ENCODE measurements at regions of chr5 and their contacts with region 1.

Region 1: GRCh38 chr5:141968914-141969608 is at the start of gene RNF14:
- DNase-seq: peak; percentile 91 to 96 (median 94)
- ATAC-seq: peak; percentile 94 to 96
- H3K4me3 Mint-ChIP-seq: peak within 1 kb of the TSS; percentile 92 to 99 (median 96)
- H3K27ac Mint-ChIP-seq: peak within 1 kb of the TSS; percentile 92 to 99 (median 97)
- H3K4me1 Mint-ChIP-seq: peaks cover 7 to 39% (median 32%) of the 10 kb centered on the region in 4 donors
- H3K27me3 Mint-ChIP-seq: no peaks in the 10 kb centered on the region
- polyA plus RNA-seq, gene RNF14: 27.4 to 40.1 (median 30.1) TPM

Region 2: DNA sequence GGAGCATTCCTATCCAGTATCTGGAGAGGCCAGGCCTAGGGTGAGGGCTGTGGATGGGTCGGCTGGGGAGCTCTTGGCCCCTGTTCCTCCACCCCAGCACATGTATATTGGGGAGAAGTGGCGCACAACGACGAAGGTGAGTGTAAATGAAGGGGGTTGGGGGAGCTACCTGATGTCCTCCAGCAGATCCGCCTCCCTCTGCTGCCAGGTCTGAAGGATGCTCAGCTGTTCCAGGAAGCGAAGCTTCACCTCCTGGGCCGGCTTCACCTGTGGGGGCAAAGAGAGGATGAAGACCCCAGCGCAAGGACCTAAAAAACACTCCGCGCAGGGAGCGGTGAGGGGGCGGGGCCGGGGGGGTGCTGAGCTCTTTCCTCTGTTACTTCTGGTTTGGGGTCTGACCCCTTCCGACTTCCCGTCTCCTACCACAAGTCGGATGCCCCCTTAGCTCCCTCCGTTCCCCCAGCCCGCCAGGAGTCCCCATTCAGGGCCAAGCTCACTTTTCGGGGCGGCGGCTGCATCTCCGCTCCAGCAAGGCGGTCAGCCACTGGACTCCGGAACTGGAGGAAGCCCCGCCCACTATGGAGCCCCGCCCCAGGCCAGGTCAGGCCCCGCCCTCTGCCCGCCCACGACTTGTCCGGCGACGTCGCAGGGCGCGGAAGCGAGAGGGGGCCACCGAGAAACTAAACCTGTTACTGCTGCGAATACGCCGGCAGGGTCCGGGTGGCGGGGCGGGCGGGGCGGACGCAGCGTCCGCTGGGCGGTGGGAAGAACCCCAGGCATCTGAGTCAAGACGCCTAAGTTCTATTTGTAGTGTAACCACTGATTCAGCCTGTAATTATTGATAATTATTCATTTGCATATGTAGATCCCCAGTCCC is 318.0 kb before region 1 on chr5 and contains the start of gene FCHSD1:
- POLR2A ChIA-PET with region 1: interaction called, 16 read pairs
- DNase-seq: peak; percentile 57 to 89 (median 80)
- ATAC-seq: peak; percentile 87 to 95
- H3K4me3 Mint-ChIP-seq: peak within 1 kb of the TSS; percentile 67 to 97 (median 92)
- H3K27ac Mint-ChIP-seq: peak within 1 kb of the TSS; percentile 79 to 98 (median 94)
- H3K4me1 Mint-ChIP-seq: peaks cover 37 to 56% (median 44%) of the 10 kb centered on the region in 4 donors
- H3K27me3 Mint-ChIP-seq: peaks cover 0 to 5% (median 0%) of the 10 kb centered on the region in 5 donors
- polyA plus RNA-seq, gene FCHSD1: 8.8 to 9.4 (median 9.3) TPM

Region 3: GRCh38 chr5:141661894-141662435 is 307.1 kb before region 1 on chr5:
- POLR2A ChIA-PET with region 1: no interaction called
- DNase-seq: peak in 1 of 10 donors; percentile 19
- ATAC-seq: no peak
- H3K4me3 Mint-ChIP-seq: no peak overlapping the region
- H3K27ac Mint-ChIP-seq: no peak overlapping the region
- H3K4me1 Mint-ChIP-seq: peaks cover 2 to 6% (median 5%) of the 10 kb centered on the region in 4 donors
- H3K27me3 Mint-ChIP-seq: peaks cover 0 to 5% (median 0%) of the 10 kb centered on the region in 5 donors

Region 4: GRCh38 chr5:141681695-141682641 is 287.1 kb before region 1 on chr5 and contains the start of gene ARAP3:
- POLR2A ChIA-PET with region 1: interaction called, 15 read pairs
- DNase-seq: peak in 5 of 10 donors; percentile 22 to 48 (median 41)
- ATAC-seq: peak; percentile 56 to 79
- H3K4me3 Mint-ChIP-seq: peak within 1 kb of the TSS; percentile 32 to 89 (median 83)
- H3K27ac Mint-ChIP-seq: peak within 1 kb of the TSS; percentile 42 to 95 (median 87)
- H3K4me1 Mint-ChIP-seq: peaks cover 18 to 44% (median 29%) of the 10 kb centered on the region in 4 donors
- H3K27me3 Mint-ChIP-seq: no peaks in the 10 kb centered on the region
- polyA plus RNA-seq, gene ARAP3: not detected

Region 5: GRCh38 chr5:141849375-141850243 is 119.5 kb before region 1 on chr5:
- POLR2A ChIA-PET with region 1: interaction called, 12 read pairs
- DNase-seq: peak; percentile 39 to 77 (median 59)
- ATAC-seq: peak; percentile 72 to 78
- H3K4me3 Mint-ChIP-seq: peak overlapping the region; percentile 82 to 93 (median 87)
- H3K27ac Mint-ChIP-seq: peak overlapping the region in 9 of 10 donors; percentile 60 to 92 (median 87)
- H3K4me1 Mint-ChIP-seq: peaks cover 8 to 24% (median 13%) of the 10 kb centered on the region in 4 donors
- H3K27me3 Mint-ChIP-seq: peaks cover 0 to 5% (median 1%) of the 10 kb centered on the region in 5 donors

Region 6: DNA sequence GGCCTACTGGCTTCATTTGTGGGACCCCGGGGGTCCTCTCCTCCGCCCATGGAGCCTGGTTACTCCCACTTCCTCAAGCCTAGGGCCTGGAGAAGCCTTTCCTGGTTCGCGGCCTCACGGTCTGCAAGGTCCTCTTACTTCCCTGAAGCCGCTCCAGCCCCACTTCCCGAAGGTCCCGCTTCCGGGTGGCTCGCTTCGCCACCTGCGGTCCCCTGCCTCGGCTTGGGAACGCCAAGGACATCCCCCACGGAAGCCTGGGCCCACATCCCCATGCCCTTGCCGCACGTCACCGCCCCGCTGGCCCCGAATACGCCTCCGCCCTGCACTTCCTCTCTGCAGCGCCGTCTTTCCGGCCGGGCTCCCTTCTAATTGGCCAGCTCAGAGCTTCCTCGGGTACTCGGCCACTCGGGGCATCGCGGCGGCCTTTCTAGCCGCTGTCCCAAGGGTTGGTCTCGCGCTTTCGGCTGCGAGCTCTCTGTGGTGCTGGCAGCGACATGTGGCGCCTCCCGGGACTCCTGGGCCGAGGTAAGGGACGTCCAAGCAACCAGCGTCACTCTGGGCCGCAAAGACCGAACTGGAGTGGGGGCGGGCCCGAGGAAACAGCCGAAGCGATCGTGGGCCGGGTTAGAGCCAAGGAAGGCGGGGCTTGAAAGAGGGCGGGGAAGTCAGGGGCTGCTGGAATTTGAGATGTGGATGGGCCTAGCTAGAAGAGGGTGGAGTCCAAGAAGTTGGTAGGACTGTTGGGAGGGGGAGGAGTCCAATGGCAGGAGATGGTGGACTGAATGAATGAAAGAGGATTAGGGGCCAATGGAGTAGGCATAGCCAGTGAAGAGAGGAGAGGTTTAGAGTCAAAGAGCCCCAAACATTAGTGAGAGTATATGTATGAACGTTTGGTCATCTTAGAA is 45.4 kb before region 1 on chr5 and contains the start of gene DELE1:
- POLR2A ChIA-PET with region 1: interaction called, 22 read pairs
- DNase-seq: peak; percentile 75 to 93 (median 88)
- ATAC-seq: peak; percentile 95 to 97
- H3K4me3 Mint-ChIP-seq: peak within 1 kb of the TSS; percentile 88 to 96 (median 94)
- H3K27ac Mint-ChIP-seq: peak within 1 kb of the TSS; percentile 93 to 98 (median 98)
- H3K4me1 Mint-ChIP-seq: peaks cover 20 to 37% (median 29%) of the 10 kb centered on the region in 4 donors
- H3K27me3 Mint-ChIP-seq: no peaks in the 10 kb centered on the region
- polyA plus RNA-seq, gene DELE1: 28.2 to 33.5 (median 31.4) TPM

Region 7: GRCh38 chr5:142012792-142013388 is 43.8 kb after region 1 on chr5 and contains the start of gene GNPDA1:
- POLR2A ChIA-PET with region 1: interaction called, 11 read pairs
- DNase-seq: peak; percentile 28 to 70 (median 59)
- ATAC-seq: peak; percentile 68 to 75
- H3K4me3 Mint-ChIP-seq: peak within 1 kb of the TSS; percentile 79 to 91 (median 87)
- H3K27ac Mint-ChIP-seq: peak within 1 kb of the TSS; percentile 87 to 96 (median 92)
- H3K4me1 Mint-ChIP-seq: peaks cover 22 to 80% (median 64%) of the 10 kb centered on the region in 4 donors
- H3K27me3 Mint-ChIP-seq: no peaks in the 10 kb centered on the region
- polyA plus RNA-seq, gene GNPDA1: 40.9 to 51.0 (median 43.9) TPM